ENCODE measurements at regions of chr6 and their contacts with region 1.

Region 1: DNA sequence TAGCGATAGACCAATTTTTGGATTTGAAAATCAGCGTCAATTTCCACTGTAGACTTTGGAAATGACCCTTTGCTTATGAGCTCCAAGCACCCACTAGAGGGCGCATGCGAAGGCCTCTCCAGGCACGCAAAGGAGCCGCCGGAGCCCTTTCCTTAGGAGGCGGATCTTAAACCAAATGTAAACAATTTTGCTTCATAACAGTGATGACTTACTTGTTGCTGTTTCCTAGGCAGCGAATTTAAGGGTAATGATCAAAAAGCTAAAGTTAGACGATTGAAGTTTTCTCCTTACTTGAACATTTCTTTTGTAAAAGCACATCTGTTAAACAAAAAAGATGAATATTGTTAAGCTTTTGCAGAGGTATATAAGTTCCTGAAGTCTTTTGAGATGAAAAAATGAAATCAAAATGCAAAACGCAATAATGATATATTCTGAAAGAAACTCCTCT is 29.2 kb upstream of the EXOC2 start:
- DNase-seq: peak; percentile 87
- H3K4me3 Mint-ChIP-seq: no peak overlapping the region
- H3K27ac Mint-ChIP-seq: no peak overlapping the region
- H3K4me1 Mint-ChIP-seq: no peaks in the 10 kb centered on the region
- H3K27me3 Mint-ChIP-seq: peaks cover 12% of the 10 kb centered on the region
- CTCF ChIP-seq: peak; percentile 74

Region 2: GRCh38 chr6:1390133-1390804 is 668.2 kb after region 1 on chr6:
- CTCF ChIA-PET with region 1: interaction called, 12 read pairs
- POLR2A ChIA-PET with region 1: no interaction called
- intact Hi-C with region 1: loop called (anchors 2 kb)
- DNase-seq: peak; percentile 60
- H3K4me3 Mint-ChIP-seq: peak overlapping the region; percentile 80
- H3K27ac Mint-ChIP-seq: peak overlapping the region; percentile 39
- H3K4me1 Mint-ChIP-seq: peaks cover 12% of the 10 kb centered on the region
- H3K27me3 Mint-ChIP-seq: no peaks in the 10 kb centered on the region
- CTCF ChIP-seq: no peak

Measured in MCF 10A (cell line).